MCF 10A (cell line): ENCODE measurements at regions of chr18 and their contacts with region 1.

Region 1: DNA sequence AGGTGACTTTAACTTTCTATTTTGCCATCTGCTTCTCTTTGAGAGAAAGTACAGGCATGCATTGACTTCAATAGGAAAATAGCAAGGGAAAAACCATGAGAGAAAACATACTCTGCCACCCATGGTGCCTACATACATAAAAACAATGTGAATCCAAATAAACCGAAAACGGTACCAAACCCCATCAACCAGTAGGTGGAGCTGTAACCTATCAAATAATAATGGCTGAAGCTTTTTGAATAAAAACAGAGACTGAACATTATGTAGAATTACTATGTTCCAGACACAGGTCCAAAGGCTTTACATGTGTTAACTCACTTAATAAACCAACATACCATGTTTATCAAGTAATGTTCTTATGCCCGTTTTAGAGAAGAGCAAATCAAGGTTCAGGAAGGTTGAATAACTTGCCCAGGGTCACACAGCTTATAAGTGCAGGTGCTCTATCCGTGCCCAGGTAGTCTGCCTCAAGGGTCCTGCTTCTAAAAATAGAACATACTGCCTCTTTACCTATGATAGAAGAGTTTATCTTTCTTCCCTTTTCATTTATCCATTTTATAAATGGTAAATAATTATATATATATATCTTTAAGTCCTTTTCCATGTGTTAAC is 293.9 kb upstream of the SYT4 start:
- DNase-seq: peak; percentile 71
- H3K4me3 Mint-ChIP-seq: no peak overlapping the region
- H3K27ac Mint-ChIP-seq: no peak overlapping the region
- H3K4me1 Mint-ChIP-seq: no peaks in the 10 kb centered on the region
- H3K27me3 Mint-ChIP-seq: peaks cover 61% of the 10 kb centered on the region
- CTCF ChIP-seq: peak; percentile 58

Region 2: GRCh38 chr18:42929857-42930256 is 641.3 kb before region 1 on chr18:
- CTCF ChIA-PET with region 1: no interaction called
- POLR2A ChIA-PET with region 1: no interaction called
- intact Hi-C with region 1: no loop called
- DNase-seq: peak; percentile 73
- H3K4me3 Mint-ChIP-seq: no peak overlapping the region
- H3K27ac Mint-ChIP-seq: peak overlapping the region; percentile 43
- H3K4me1 Mint-ChIP-seq: peaks cover 9% of the 10 kb centered on the region
- H3K27me3 Mint-ChIP-seq: no peaks in the 10 kb centered on the region
- CTCF ChIP-seq: no peak

Region 3: DNA sequence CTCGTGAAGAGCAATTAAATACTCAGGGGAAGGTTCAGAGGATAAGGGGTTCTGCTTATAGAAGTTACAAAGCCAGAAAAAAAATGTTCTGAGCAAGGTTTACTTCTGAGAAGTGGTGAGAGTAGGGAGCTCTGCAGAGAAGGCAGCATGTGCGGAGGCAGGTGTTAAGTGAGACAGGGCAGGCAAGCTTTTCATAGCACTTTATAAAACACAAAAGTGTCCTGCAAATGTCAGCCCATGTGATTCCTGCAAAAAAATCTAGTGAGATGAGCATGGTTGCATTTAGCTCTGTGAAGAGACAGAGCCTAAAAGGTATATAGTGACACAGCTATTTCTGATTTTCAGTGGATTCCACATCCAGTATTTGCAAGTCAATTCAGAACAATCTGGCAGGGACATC is 70.1 kb before region 1 on chr18:
- CTCF ChIA-PET with region 1: no interaction called
- POLR2A ChIA-PET with region 1: no interaction called
- intact Hi-C with region 1: no loop called
- DNase-seq: no peak
- H3K4me3 Mint-ChIP-seq: no peak overlapping the region
- H3K27ac Mint-ChIP-seq: no peak overlapping the region
- H3K4me1 Mint-ChIP-seq: no peaks in the 10 kb centered on the region
- H3K27me3 Mint-ChIP-seq: no peaks in the 10 kb centered on the region
- CTCF ChIP-seq: no peak

Region 4: DNA sequence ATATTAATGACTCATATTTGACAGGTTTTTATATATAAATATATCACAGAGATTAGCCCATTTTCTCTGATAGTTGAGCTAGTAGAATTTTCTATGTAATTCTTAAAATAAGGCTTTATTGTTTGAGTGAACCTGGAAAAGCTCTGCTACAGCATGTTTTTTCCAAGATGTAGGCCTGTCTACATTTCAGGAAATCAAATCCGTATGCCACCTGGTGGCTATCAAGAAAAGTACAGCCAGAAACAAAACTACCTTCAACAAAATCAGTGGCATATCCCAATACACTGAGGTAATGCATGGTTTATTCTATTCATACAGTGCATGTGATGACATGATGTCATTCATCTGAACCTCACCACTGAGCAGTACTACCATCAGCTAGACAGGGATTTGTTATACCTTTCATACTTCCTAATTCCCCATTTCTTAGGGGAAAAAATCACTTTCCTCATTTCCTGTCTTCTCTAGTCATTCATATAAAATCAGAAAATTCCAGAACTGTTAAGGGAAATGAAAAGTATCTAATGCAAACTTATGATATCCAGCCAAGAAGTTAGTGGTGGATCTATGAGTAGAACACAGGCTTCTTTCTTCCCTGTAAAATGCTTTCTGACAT is 16.5 kb after region 1 on chr18:
- CTCF ChIA-PET with region 1: interaction called, 372 read pairs
- POLR2A ChIA-PET with region 1: interaction called, 17 read pairs
- intact Hi-C with region 1: loop called (anchors 1 kb)
- DNase-seq: peak; percentile 52
- H3K4me3 Mint-ChIP-seq: no peak overlapping the region
- H3K27ac Mint-ChIP-seq: no peak overlapping the region
- H3K4me1 Mint-ChIP-seq: no peaks in the 10 kb centered on the region
- H3K27me3 Mint-ChIP-seq: peaks cover 30% of the 10 kb centered on the region
- CTCF ChIP-seq: peak; percentile 53

Region 5: DNA sequence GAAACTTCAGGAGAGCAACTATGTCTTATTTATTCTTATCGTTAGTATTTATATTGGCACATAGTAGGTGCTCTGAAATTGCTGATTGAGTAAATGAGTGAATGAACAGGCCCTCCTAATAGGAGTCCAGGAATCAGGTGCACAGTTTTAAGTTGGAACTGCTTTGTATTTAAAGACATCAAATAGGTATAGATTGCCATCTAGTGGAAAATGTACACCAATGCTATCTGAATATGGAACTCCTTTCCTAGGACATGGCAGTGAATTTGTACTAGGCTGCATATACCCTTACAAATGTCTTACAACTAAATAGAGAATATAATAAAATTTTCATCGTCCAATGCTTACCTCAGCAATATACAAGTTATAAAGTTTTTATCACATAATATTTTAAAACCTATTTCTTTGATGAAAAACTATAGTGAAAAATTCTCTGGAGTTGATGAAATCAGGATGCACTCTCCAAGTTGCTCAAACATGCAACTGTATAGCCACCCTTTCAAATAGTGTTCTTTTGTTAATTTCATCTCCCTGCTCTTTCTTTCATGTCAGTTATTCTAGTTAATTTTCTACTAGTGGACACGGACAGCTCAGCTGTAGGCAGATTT is 25.0 kb after region 1 on chr18:
- CTCF ChIA-PET with region 1: interaction called, 372 read pairs
- POLR2A ChIA-PET with region 1: no interaction called
- intact Hi-C with region 1: loop called (anchors 2 kb)
- DNase-seq: peak; percentile 42
- H3K4me3 Mint-ChIP-seq: no peak overlapping the region
- H3K27ac Mint-ChIP-seq: no peak overlapping the region
- H3K4me1 Mint-ChIP-seq: no peaks in the 10 kb centered on the region
- H3K27me3 Mint-ChIP-seq: peaks cover 40% of the 10 kb centered on the region
- CTCF ChIP-seq: peak; percentile 41

Region 6: DNA sequence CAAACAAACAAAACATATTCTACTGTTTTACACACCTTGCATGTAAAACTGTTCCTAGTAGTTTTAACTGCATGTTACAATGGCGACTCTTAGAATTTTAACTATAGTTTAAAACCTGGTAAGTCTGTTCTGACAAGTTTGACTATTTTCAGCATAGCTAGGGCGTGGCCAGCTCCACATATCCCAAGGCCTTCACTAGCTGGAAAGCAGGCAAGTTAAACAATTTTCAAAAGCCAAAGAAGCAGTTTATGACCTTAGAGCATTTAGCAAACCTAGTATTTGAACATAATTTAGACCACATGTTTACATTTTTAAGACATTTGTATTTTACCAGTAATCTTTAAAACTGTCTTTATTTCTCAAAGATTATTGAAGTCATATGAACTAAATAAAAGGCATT is 108.9 kb after region 1 on chr18:
- CTCF ChIA-PET with region 1: no interaction called
- POLR2A ChIA-PET with region 1: no interaction called
- intact Hi-C with region 1: no loop called
- DNase-seq: no peak
- H3K4me3 Mint-ChIP-seq: no peak overlapping the region
- H3K27ac Mint-ChIP-seq: no peak overlapping the region
- H3K4me1 Mint-ChIP-seq: no peaks in the 10 kb centered on the region
- H3K27me3 Mint-ChIP-seq: no peaks in the 10 kb centered on the region
- CTCF ChIP-seq: no peak